ENCODE measurements at regions of chr5 and their contacts with region 1.

Region 1: GRCh38 chr5:78537821-78538220 is 110.8 kb downstream of the LHFPL2 start:
- DNase-seq: no peak
- ATAC-seq: peak; percentile 57 to 81 (median 68)
- H3K4me3 ChIP-seq: no peak overlapping the region
- H3K27ac ChIP-seq: peak overlapping the region in 1 of 12 donors; percentile 6
- H3K4me1 ChIP-seq: peaks cover 0 to 72% (median 20%) of the 10 kb centered on the region in 12 donors
- H3K27me3 ChIP-seq: no peaks in the 10 kb centered on the region
- CTCF ChIP-seq: peak in 11 of 12 donors; percentile 30 to 71 (median 62)
- POLR2A ChIP-seq: no peak

Region 2: DNA sequence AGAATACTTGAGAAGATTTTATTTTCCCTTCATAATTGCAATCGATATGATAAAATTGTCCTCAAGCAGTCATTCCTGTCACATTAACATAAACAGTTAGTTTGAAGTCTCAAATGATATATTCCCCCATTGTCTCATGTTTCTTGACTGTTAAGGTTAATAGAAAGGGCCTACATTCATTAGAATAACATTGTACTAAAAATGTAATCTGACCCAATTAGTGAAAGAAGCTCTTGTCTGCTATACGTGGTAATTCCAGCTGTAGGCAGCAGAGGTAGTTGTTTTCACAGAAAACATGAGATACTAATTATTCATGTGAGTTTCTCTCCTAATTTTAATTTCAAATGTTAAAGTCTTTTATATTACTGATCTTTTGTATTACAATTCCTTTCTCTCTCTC is 217.4 kb before region 1 on chr5:
- intact Hi-C with region 1: loop called in 1 of 10 experiments (anchors 10 kb)
- DNase-seq: no peak
- ATAC-seq: no peak
- H3K4me3 ChIP-seq: no peak overlapping the region
- H3K27ac ChIP-seq: no peak overlapping the region
- H3K4me1 ChIP-seq: no peaks in the 10 kb centered on the region
- H3K27me3 ChIP-seq: no peaks in the 10 kb centered on the region
- CTCF ChIP-seq: peak; percentile 44 to 71 (median 58)
- POLR2A ChIP-seq: no peak

Region 3: GRCh38 chr5:78648359-78649210 is 110.8 kb after region 1 on chr5 and contains the start of gene LHFPL2:
- intact Hi-C with region 1: loop called in 2 of 10 experiments (anchors 5 to 10 kb)
- DNase-seq: peak; percentile 78 to 88 (median 83)
- ATAC-seq: peak; percentile 44 to 91 (median 84)
- H3K4me3 ChIP-seq: peak within 1 kb of the TSS; percentile 50 to 97 (median 78)
- H3K27ac ChIP-seq: peak within 1 kb of the TSS; percentile 87 to 94 (median 91)
- H3K4me1 ChIP-seq: peaks cover 0 to 30% (median 14%) of the 10 kb centered on the region in 12 donors
- H3K27me3 ChIP-seq: peaks cover 0 to 4% (median 0%) of the 10 kb centered on the region in 9 donors
- CTCF ChIP-seq: no peak
- POLR2A ChIP-seq: peak in 1 of 2 donors; percentile 15
- total RNA-seq, gene LHFPL2: 5.6 to 35.6 (median 10.1) TPM

Region 4: DNA sequence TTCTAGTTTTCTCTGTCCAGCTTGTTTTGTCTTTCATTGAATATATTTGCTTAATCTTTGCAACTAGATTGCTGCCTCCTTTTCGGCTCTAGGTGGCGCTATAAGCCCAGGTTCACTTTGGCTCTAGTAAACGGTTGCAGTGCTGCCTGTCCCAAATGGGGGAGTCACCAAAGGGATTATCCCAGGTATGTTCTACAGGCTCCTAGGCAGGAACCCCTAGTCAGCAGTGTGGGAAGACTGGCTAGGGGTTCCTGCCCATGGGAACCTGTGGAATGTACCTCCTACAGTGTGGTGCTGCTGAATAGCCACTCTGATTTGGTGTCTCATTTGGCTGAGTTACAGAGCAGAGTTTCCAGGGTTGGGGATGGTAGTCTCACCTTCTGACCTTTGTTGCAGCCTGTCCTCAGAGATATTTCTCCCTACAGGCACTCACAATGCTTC is 362.1 kb after region 1 on chr5:
- intact Hi-C with region 1: loop called in 4 of 10 experiments (anchors 5 to 10 kb)
- DNase-seq: no peak
- ATAC-seq: peak in 1 of 4 donors; percentile 36
- H3K4me3 ChIP-seq: no peak overlapping the region
- H3K27ac ChIP-seq: no peak overlapping the region
- H3K4me1 ChIP-seq: peaks cover 0 to 11% (median under 1%) of the 10 kb centered on the region in 12 donors
- H3K27me3 ChIP-seq: no peaks in the 10 kb centered on the region
- CTCF ChIP-seq: peak; percentile 40 to 74 (median 58)
- POLR2A ChIP-seq: no peak

Region 5: GRCh38 chr5:78964887-78965286 is 427.1 kb after region 1 on chr5:
- intact Hi-C with region 1: loop called in 9 of 10 experiments (anchors 2 to 5 kb)
- DNase-seq: no peak
- ATAC-seq: peak; percentile 71 to 86 (median 81)
- H3K4me3 ChIP-seq: no peak overlapping the region
- H3K27ac ChIP-seq: no peak overlapping the region
- H3K4me1 ChIP-seq: no peaks in the 10 kb centered on the region
- H3K27me3 ChIP-seq: no peaks in the 10 kb centered on the region
- CTCF ChIP-seq: peak in 11 of 12 donors; percentile 36 to 69 (median 61)
- POLR2A ChIP-seq: no peak